Activated CD8-positive, alpha-beta T cell treated with anti-CD3 and anti-CD28 coated beads for 36 hours (primary cell): ENCODE measurements at regions of chr10 and their contacts with region 1.

Region 1: DNA sequence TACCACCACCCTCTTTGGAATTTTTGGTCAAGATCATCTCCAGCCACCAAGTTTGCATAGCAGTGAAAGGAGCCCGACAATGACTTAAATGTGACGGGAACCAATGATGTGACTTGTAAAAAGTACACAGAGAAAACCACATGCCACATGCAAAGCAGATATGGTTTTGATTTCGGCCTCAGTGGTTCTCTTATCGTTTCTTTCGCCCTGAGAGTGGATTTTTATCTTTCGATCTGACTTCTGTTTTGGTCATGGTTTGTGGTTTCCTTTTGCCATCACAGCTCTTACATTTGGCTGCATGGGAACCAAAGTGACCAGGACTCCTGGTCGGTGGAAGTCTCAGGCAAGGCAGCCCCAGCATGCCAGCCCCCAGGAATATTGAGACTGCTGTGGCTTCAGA is 31.5 kb downstream of the TCF7L2 start:
- DNase-seq: peak; percentile 77
- ATAC-seq: peak; percentile 69
- H3K4me3 Mint-ChIP-seq: no peak overlapping the region
- H3K27ac Mint-ChIP-seq: no peak overlapping the region
- H3K4me1 Mint-ChIP-seq: peaks cover 26% of the 10 kb centered on the region
- H3K27me3 Mint-ChIP-seq: peaks cover 58% of the 10 kb centered on the region
- CTCF ChIP-seq: no peak

Region 2: DNA sequence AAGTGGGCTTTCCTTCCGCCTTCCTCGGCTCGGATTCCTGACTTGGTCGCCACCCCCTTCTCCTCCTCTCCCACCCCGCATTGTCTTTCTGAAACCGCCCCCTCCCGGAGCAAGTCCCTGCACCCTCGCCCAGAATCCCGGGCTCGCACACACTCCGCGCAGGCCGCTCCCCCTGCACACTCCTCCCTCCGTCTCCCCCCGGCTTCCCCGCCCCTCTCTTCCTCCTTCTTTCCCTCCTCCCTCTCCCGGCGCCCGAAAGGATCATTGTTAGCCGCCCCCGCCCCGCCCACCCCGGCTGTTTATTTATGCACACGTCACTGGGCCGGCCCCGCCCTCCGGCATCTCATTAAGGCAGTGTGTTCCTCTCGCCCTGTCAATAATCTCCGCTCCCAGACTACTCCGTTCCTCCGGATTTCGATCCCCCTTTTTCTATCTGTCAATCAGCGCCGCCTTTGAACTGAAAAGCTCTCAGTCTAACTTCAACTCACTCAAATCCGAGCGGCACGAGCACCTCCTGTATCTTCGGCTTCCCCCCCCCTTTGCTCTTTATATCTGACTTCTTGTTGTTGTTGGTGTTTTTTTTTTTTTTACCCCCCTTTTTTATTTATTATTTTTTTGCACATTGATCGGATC is 31.6 kb before region 1 on chr10 and contains the start of gene TCF7L2:
- CTCF ChIA-PET with region 1: no interaction called
- POLR2A ChIA-PET with region 1: no interaction called
- intact Hi-C with region 1: loop called (anchors 2 kb)
- DNase-seq: peak; percentile 61
- ATAC-seq: peak; percentile 36
- H3K4me3 Mint-ChIP-seq: peak within 1 kb of the TSS; percentile 91
- H3K27ac Mint-ChIP-seq: peak within 1 kb of the TSS; percentile 74
- H3K4me1 Mint-ChIP-seq: peaks cover 17% of the 10 kb centered on the region
- H3K27me3 Mint-ChIP-seq: peaks cover 23% of the 10 kb centered on the region
- CTCF ChIP-seq: no peak
- total RNA-seq, gene TCF7L2: 1.5 to 1.6 TPM

Region 3: GRCh38 chr10:113093188-113094113 is 111.9 kb after region 1 on chr10:
- CTCF ChIA-PET with region 1: no interaction called
- POLR2A ChIA-PET with region 1: no interaction called
- intact Hi-C with region 1: loop called (anchors 2 kb)
- DNase-seq: no peak
- ATAC-seq: peak; percentile 43
- H3K4me3 Mint-ChIP-seq: no peak overlapping the region
- H3K27ac Mint-ChIP-seq: peak overlapping the region; percentile 8
- H3K4me1 Mint-ChIP-seq: peaks cover 33% of the 10 kb centered on the region
- H3K27me3 Mint-ChIP-seq: no peaks in the 10 kb centered on the region
- CTCF ChIP-seq: no peak